K562 (cell line): ENCODE measurements at regions of chr7 and their contacts with region 1.

Region 1: GRCh38 chr7:152162287-152162686 is 136.8 kb downstream of the GALNT11 start:
- DNase-seq: no peak
- ATAC-seq: peak; percentile 36; the same call in 2 of the 3 replicates
- H3K4me3 ChIP-seq: no peak overlapping the region
- H3K27ac ChIP-seq: no peak overlapping the region
- H3K4me1 ChIP-seq: no peaks in the 10 kb centered on the region
- H3K27me3 ChIP-seq: no peaks in the 10 kb centered on the region
- CTCF ChIP-seq: no peak
- EP300 ChIP-seq: no peak
- POLR2A ChIP-seq: no peak
- RAD21 ChIP-seq: no peak

Region 2: GRCh38 chr7:152103691-152104090 is 58.6 kb before region 1 on chr7:
- CTCF ChIA-PET with region 1: no interaction called
- POLR2A ChIA-PET with region 1: no interaction called
- in situ Hi-C with region 1: no loop called
- intact Hi-C with region 1: no loop called
- DNase-seq: no peak
- ATAC-seq: no peak
- H3K4me3 ChIP-seq: no peak overlapping the region
- H3K27ac ChIP-seq: no peak overlapping the region
- H3K4me1 ChIP-seq: 0 out of 5 replicates have a peak, but pooled peaks cover 0 to 2% of the 10 kb centered on the region in 2 experiments
- H3K27me3 ChIP-seq: no peaks in the 10 kb centered on the region
- CTCF ChIP-seq: no peak
- EP300 ChIP-seq: no peak
- POLR2A ChIP-seq: no peak
- RAD21 ChIP-seq: no peak

Region 3: GRCh38 chr7:152152267-152152666 is 10.0 kb before region 1 on chr7:
- CTCF ChIA-PET with region 1: no interaction called
- POLR2A ChIA-PET with region 1: interaction called, 10 read pairs
- in situ Hi-C with region 1: no loop called
- intact Hi-C with region 1: no loop called
- DNase-seq: no peak
- ATAC-seq: no peak
- H3K4me3 ChIP-seq: no peak overlapping the region
- H3K27ac ChIP-seq: no peak overlapping the region
- H3K4me1 ChIP-seq: no peaks in the 10 kb centered on the region
- H3K27me3 ChIP-seq: no peaks in the 10 kb centered on the region
- CTCF ChIP-seq: no peak
- EP300 ChIP-seq: no peak
- POLR2A ChIP-seq: no peak
- RAD21 ChIP-seq: no peak

Region 4: DNA sequence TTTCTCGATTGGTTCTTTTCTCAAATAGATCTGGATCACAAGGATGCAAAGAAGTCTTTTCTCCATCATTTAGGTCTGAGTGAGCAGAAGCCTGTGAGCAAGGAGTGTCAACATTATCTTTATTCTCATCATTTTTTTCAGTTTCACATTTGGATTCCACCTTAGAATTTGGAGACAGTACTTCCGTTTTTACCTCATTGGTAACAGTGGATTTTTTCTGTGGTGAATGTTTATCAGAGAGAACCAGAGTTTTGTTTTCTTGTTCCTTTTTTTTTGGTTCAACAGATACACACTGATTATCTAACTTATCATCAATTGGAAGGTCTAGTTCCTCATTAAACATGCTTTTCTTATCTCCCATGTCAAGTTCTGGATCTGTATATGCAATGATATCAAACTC is 14.5 kb after region 1 on chr7:
- CTCF ChIA-PET with region 1: no interaction called
- POLR2A ChIA-PET with region 1: no interaction called
- in situ Hi-C with region 1: no loop called
- intact Hi-C with region 1: no loop called
- DNase-seq: no peak
- ATAC-seq: no peak
- H3K4me3 ChIP-seq: no peak overlapping the region
- H3K27ac ChIP-seq: no peak overlapping the region
- H3K4me1 ChIP-seq: no peaks in the 10 kb centered on the region
- H3K27me3 ChIP-seq: no peaks in the 10 kb centered on the region
- CTCF ChIP-seq: no peak
- EP300 ChIP-seq: no peak
- POLR2A ChIP-seq: no peak
- RAD21 ChIP-seq: no peak